ENCODE measurements at regions of chr14 and their contacts with region 1.

Region 1: DNA sequence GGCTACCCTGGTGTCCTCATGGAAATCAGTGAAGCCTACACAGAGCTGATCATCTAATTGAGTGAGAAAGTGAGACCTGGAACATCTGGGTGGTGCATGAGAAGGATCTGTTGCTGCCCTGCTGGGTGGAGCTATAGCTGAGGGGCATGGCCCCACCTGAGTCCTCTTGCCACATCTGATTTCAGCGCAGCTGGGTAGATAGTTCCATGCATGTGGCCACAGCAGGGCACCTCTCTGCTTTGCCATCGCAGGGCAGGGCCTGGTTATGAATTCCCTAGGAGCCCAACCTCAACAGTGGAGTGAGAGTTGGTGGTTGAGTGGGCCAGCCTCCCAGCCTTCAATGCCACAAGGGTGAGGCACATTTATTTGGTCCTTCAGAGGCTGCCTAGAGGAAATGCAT is 407.8 kb downstream of the BCL11B start:
- DNase-seq: no peak
- ATAC-seq: no peak
- H3K4me3 ChIP-seq: no peak overlapping the region
- H3K27ac ChIP-seq: no peak overlapping the region
- H3K4me1 ChIP-seq: no peaks in the 10 kb centered on the region
- H3K27me3 ChIP-seq: peaks cover 0 to 10% (median 2%) of the 10 kb centered on the region in 7 donors
- CTCF ChIP-seq: no peak

Region 2: DNA sequence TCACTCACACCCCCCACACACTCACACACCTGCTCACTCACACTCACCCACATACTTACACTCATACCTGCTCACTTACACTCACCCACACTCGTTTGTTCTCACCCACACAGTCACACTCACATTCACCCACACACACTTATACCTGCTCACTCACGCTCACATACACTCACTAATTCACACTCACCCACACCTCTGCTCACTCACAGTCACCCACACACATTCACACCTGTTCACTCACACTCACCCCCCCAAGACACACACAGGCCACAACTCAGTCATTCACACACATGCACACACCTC is 28.5 kb before region 1 on chr14:
- intact Hi-C with region 1: loop called in 1 of 10 experiments (anchors 2 kb)
- DNase-seq: no peak
- ATAC-seq: no peak
- H3K4me3 ChIP-seq: no peak overlapping the region
- H3K27ac ChIP-seq: no peak overlapping the region
- H3K4me1 ChIP-seq: no peaks in the 10 kb centered on the region
- H3K27me3 ChIP-seq: peaks cover 0 to 23% (median 0%) of the 10 kb centered on the region in 7 donors
- CTCF ChIP-seq: no peak

Region 3: GRCh38 chr14:98937712-98938505 is 73.7 kb after region 1 on chr14:
- intact Hi-C with region 1: no loop called
- DNase-seq: no peak
- ATAC-seq: no peak
- H3K4me3 ChIP-seq: no peak overlapping the region
- H3K27ac ChIP-seq: no peak overlapping the region
- H3K4me1 ChIP-seq: no peaks in the 10 kb centered on the region
- H3K27me3 ChIP-seq: peaks cover 0 to 40% (median 3%) of the 10 kb centered on the region in 7 donors
- CTCF ChIP-seq: no peak